Activated T-helper 1 cell treated with anti-CD3 and anti-CD28 coated beads, Interleukin-12 subunit alpha, Interleukin-12 subunit beta, Interleukin-2, Interleukin-4 antibody, amounts not matched to agents 30 ng/mL and 10 ng/mL and 1 ng/mL, durations not matched to agents 14 hours and 24 hours and 36 hours (primary cell): ENCODE measurements at regions of chr2 and their contacts with region 1.

Region 1: DNA sequence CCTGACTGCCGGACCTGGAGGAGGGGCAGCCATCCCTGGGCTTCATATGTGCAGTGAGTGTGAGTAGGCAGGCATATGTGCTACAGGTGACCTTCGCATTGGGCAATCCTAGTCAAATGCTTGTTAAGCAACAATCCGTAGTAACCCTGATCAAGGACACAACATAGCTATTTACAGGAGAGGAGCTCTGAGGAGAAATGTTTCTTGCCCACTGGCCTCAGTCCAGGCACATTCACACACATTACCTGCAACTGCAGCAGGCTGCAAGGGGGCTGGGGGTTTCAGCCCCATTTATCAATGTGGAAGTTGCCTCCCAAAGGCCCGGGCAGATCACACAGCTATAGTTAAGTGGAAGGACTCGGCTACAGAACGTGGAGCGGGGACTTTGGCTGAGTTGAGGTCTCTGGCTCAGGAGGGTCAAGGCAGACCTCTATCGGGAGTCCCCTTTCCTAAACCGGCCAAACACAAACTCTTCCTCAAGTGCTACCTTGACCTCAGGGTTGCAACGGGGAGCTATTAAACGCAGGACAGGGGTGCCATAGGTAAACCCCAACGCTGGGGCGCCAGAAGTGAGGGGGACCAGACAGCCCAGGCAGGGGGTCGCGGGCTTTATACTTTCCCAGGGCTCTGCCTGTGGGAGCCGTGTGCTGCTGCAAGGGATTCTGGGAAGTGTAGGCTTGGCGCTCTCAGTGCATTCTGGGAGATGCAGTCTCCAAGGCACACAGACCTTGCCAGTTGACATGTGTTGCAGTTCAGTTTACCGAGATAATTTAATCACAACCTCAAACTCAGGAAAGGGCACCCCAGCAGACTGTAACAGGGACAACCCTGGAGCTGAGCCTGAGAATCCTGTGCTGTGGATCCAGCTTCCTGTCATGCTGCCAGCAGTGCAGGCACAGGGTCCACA is 9.4 kb downstream of the KHK start:
- DNase-seq: peak; percentile 32
- H3K4me3 Mint-ChIP-seq: peak overlapping the region; percentile 37
- H3K27ac Mint-ChIP-seq: no peak overlapping the region
- H3K4me1 Mint-ChIP-seq: peaks cover 16% of the 10 kb centered on the region
- H3K27me3 Mint-ChIP-seq: no peaks in the 10 kb centered on the region

Region 2: GRCh38 chr2:27191053-27191829 is 95.2 kb after region 1 on chr2:
- intact Hi-C with region 1: loop called (anchors 1 kb)
- DNase-seq: peak; percentile 25
- H3K4me3 Mint-ChIP-seq: no peak overlapping the region
- H3K27ac Mint-ChIP-seq: no peak overlapping the region
- H3K4me1 Mint-ChIP-seq: no peaks in the 10 kb centered on the region
- H3K27me3 Mint-ChIP-seq: no peaks in the 10 kb centered on the region